Right cardiac atrium (tissue), 5 donors: ENCODE measurements at regions of chr1 and their contacts with region 1.

Region 1: GRCh38 chr1:3491291-3492246 is 37.1 kb downstream of the ARHGEF16 start:
- DNase-seq: peak; percentile 75 to 93 (median 93)
- ATAC-seq: peak; percentile 69 to 81
- H3K4me3 ChIP-seq: no peak overlapping the region
- H3K27ac ChIP-seq: no peak overlapping the region
- H3K4me1 ChIP-seq: no peaks in the 10 kb centered on the region
- H3K27me3 ChIP-seq: no peaks in the 10 kb centered on the region

Region 2: DNA sequence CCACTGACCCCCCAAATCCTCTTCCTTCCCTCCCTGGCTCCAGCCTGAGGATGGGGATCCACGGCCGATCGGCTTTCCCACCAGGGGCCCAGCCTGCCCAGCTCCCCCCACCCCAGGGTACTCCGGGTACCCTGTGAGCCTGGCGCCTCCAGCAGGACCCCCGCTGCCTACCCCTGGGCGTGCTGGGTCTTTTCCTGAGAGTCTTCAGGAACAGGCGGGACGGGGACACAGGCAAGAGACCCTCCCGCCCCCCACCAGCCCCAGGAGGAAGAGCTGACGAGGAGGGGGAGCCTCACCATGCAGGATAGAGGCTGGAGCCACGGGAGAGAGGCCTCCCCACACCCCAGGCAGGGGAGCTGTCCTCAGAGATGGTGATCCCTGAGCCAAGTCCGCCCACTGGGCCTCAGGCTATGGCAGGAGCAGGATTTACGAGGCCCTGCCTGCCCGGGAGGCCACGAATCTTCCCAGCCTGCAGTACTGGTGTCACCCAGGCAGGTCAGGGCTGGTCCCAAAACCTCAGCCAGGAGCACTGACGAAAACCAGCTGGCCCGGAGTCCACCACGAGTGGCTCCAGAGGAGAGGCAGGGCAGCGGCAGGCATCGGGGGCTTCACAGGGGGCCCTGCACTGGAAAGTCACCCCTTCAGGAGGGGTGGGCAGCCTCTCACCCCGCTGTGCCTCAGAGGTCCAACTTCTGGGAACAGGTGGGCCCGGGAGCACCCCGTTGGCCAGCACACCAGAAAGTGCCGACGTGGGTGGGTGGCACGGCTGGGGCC is 61.8 kb after region 1 on chr1:
- intact Hi-C with region 1: loop called in 1 of 4 experiments (anchors 10 kb)
- DNase-seq: no peak
- ATAC-seq: no peak
- H3K4me3 ChIP-seq: no peak overlapping the region
- H3K27ac ChIP-seq: no peak overlapping the region
- H3K4me1 ChIP-seq: no peaks in the 10 kb centered on the region
- H3K27me3 ChIP-seq: no peaks in the 10 kb centered on the region

Region 3: DNA sequence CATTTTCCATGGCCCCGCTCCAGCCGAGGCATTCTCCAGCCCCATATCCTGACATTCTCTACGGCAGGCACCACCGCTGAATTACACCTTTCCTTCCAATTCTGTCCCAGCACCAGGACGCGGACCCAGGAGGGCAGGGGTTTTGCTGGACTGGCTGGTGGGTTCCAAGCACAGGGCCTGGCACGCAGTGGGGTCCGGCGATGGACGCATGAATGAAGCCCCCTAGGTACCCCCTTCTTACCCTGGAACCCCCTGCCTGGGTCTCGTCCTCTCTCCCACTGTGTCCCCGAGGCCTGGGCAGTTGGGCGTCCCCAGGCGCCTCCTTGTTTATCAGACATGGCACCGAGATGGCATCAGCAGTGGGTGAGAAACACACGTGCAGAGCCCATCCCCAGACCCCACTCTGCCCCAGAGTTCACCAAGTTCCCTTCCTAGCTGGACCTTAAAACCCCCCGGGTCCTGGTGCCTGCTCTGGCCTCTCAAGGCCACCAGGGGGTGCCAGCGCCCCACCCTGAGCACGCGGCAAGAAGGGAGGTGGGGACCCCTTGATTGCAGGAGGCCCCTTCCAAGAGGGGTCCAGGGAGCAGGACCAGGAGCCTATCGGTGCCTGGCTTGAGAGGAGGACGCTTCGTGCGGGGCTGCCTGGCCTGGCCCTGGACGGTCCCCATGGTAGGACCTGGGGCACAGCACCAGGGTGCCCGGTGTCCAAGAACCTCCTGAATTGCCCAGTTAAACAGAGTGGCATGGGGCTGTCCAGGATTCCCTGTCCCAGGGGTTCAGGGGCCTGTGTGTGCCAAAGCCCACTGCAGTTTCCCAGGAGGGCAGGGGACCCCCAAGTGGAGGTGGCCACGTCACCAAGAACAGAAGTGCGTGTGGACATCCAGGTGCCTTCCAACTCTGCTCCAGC is 73.6 kb after region 1 on chr1:
- intact Hi-C with region 1: loop called in 1 of 4 experiments (anchors 10 kb)
- DNase-seq: peak in 1 of 3 donors; percentile 78
- ATAC-seq: peak in 1 of 2 donors; percentile 38
- H3K4me3 ChIP-seq: no peak overlapping the region
- H3K27ac ChIP-seq: no peak overlapping the region
- H3K4me1 ChIP-seq: no peaks in the 10 kb centered on the region
- H3K27me3 ChIP-seq: no peaks in the 10 kb centered on the region

Region 4: DNA sequence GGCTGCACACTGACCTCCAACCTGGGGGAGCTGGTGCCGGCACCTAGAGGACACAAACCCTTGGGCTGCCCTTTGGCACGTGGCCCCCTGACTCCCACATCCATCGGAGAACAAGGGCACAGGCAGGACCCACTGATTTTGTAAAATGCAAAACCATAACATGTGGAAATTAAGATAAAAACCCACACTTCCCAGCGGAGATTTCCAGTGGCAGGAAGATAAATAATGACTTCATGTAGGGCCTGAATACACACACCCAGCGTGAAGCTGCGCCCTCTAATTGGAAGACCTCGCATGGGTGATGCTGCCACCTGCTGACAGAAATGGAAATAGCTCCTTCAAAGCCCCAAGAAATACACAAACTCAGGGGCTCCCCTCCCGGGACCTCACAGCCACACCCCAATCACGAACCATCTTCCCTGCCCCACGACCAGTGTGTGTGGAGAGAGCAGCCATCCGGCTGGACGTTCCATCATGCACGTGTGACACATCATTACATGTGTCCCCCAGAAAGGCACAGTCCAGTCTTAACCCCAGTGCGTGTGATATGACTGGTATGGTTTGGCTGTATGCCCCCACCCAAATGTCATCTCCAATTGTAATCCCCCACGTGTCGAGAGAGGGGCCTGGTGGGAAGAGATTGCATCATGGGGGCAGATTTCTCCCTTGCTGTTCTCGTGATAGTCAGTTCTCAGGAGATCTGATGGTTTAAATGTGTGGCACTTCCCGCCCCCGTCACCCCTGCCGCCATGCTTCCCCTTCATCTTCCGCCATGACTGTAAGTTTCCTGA is 127.5 kb after region 1 on chr1:
- intact Hi-C with region 1: loop called (anchors 2 kb)
- DNase-seq: peak in 2 of 3 donors; percentile 65 to 85
- ATAC-seq: peak; percentile 71 to 75
- H3K4me3 ChIP-seq: no peak overlapping the region
- H3K27ac ChIP-seq: no peak overlapping the region
- H3K4me1 ChIP-seq: peaks cover 5% of the 10 kb centered on the region
- H3K27me3 ChIP-seq: no peaks in the 10 kb centered on the region